Ascending aorta (tissue), 2 donors: ENCODE measurements at regions of chr2 and their contacts with region 1.

Region 1: GRCh38 chr2:23041443-23041842 is 343.5 kb upstream of the KLHL29 start:
- DNase-seq: no peak
- H3K4me3 ChIP-seq: no peak overlapping the region
- H3K27ac ChIP-seq: peak overlapping the region; percentile 14 to 66
- H3K4me1 ChIP-seq: peaks cover 12 to 30% of the 10 kb centered on the region in 2 donors
- H3K27me3 ChIP-seq: no peaks in the 10 kb centered on the region
- CTCF ChIP-seq: no peak

Region 2: GRCh38 chr2:22769497-22769896 is 271.9 kb before region 1 on chr2:
- intact Hi-C with region 1: no loop called
- DNase-seq: no peak
- H3K4me3 ChIP-seq: no peak overlapping the region
- H3K27ac ChIP-seq: no peak overlapping the region
- H3K4me1 ChIP-seq: no peaks in the 10 kb centered on the region
- H3K27me3 ChIP-seq: no peaks in the 10 kb centered on the region
- CTCF ChIP-seq: no peak

Region 3: GRCh38 chr2:23135481-23136100 is 94.1 kb after region 1 on chr2:
- intact Hi-C with region 1: loop called (anchors 2 kb)
- DNase-seq: peak; percentile 23 to 82
- H3K4me3 ChIP-seq: peak overlapping the region in 1 of 2 donors; percentile 29
- H3K27ac ChIP-seq: peak overlapping the region; percentile 44 to 58
- H3K4me1 ChIP-seq: peaks cover 0 to 9% of the 10 kb centered on the region in 2 donors
- H3K27me3 ChIP-seq: no peaks in the 10 kb centered on the region
- CTCF ChIP-seq: no peak